ENCODE measurements at regions of chr15 and their contacts with region 1.

Region 1: GRCh38 chr15:81000624-81001151 is at the start of gene TLNRD1:
- DNase-seq: peak; percentile 95
- H3K4me3 ChIP-seq: peak within 1 kb of the TSS; percentile 79 to 88 (median 86)
- H3K27ac ChIP-seq: peak within 1 kb of the TSS; percentile 94 to 98 (median 96)
- H3K4me1 ChIP-seq: peaks cover 0 to 50% (median 30%) of the 10 kb centered on the region in 4 donors
- H3K27me3 ChIP-seq: no peaks in the 10 kb centered on the region
- CTCF ChIP-seq: no peak
- EP300 ChIP-seq: no peak
- POLR2A ChIP-seq: peak; percentile 85 to 94
- total RNA-seq, gene TLNRD1: 12.5 to 18.3 (median 12.8) TPM

Region 2: GRCh38 chr15:80989518-80990478 is 10.9 kb before region 1 on chr15 and contains the start of gene MESD:
- intact Hi-C with region 1: loop called (anchors 1 kb)
- DNase-seq: peak; percentile 99
- H3K4me3 ChIP-seq: peak within 1 kb of the TSS; percentile 69 to 92 (median 87)
- H3K27ac ChIP-seq: peak within 1 kb of the TSS; percentile 89 to 94 (median 92)
- H3K4me1 ChIP-seq: peaks cover 0 to 46% (median 34%) of the 10 kb centered on the region in 4 donors
- H3K27me3 ChIP-seq: no peaks in the 10 kb centered on the region
- CTCF ChIP-seq: no peak
- EP300 ChIP-seq: no peak
- POLR2A ChIP-seq: peak; percentile 72 to 73
- total RNA-seq, gene MESD: 11.7 to 20.8 (median 15.7) TPM

Region 3: DNA sequence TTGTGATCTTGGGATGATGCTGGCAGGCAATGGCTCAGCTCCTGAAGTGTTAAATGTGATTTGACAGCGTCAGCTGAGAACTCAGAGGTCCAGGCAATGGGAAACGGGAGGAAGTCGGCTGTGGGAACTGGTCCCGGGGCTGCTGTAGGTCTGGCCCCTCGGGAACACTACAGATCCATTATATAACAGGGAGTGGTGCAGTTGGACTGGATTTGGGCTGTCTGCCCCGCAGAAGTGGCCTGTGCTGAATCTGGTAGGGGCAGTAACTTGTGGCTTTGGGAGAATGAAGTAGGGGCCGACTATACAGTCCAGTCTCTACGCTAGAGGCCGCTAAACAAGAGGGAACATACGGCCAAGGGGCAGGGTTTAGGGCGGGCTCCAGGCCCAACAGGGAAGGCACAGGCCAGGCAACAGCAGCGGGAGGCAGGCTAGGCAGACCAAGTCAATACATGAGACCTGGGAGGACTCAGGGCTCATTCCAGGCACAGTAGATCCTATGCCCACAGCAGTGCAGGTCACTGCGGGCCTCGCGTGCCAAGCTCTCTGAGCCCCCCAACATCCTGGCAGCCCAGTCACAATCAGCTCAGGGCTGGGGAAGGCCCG is 175.7 kb after region 1 on chr15:
- intact Hi-C with region 1: no loop called
- DNase-seq: peak; percentile 72
- H3K4me3 ChIP-seq: no peak overlapping the region
- H3K27ac ChIP-seq: peak overlapping the region in 2 of 4 donors; percentile 13 to 62
- H3K4me1 ChIP-seq: peaks cover 0 to 5% (median 3%) of the 10 kb centered on the region in 4 donors
- H3K27me3 ChIP-seq: no peaks in the 10 kb centered on the region
- CTCF ChIP-seq: no peak
- EP300 ChIP-seq: no peak
- POLR2A ChIP-seq: no peak

Region 4: DNA sequence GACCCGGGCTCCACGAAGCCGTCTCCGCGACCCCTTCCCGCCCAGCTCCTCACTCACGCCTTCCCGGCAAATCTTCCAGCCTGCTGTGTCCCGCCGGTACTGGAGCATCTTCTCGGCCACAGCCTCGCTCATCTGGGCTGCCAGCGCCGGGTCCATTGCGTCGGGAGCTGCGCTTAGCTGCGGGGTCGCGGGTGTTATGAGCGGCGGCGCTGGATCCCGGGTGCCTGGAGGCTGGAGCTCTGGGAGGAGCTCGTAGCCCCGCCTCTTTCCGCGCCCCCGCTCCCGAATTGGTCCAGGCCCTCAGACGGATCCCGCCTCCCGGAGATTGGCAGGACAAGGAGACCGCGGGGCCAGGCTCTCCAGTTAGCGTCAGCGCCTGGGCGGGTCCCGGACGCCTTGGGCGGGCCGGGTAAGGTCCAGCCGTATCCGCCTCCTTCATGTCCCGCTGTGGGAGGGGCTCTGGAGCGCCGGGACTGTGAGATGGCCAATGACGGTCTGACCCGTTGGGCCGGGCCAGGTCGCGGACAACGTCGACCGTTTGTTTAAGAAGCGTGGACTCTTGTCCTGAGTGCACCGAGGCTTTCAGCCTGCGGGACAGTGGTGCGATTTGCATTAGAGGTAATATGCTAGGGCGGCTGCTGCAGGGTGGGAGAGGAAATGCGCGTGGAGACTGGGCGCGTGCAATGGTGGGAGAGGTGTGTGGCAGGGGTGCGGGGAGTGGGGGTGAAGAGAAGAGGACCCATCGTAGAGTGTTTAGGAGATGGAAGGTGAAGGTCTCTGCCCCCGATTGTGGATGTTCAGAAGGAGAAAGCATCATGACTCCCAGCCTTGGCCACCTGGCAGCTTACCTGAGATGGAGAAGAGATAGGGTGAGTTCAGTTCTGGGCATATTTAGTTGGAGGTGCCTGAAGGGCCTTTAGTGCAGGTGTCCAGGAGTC is 323.5 kb after region 1 on chr15 and contains the start of gene STARD5:
- intact Hi-C with region 1: loop called (anchors 10 kb)
- DNase-seq: peak; percentile 99
- H3K4me3 ChIP-seq: peak within 1 kb of the TSS; percentile 57 to 79 (median 72)
- H3K27ac ChIP-seq: peak within 1 kb of the TSS; percentile 71 to 81 (median 76)
- H3K4me1 ChIP-seq: peaks cover 0 to 20% (median 6%) of the 10 kb centered on the region in 4 donors
- H3K27me3 ChIP-seq: no peaks in the 10 kb centered on the region
- CTCF ChIP-seq: no peak
- EP300 ChIP-seq: no peak
- POLR2A ChIP-seq: peak; percentile 36 to 89
- total RNA-seq, gene STARD5: 0.66 to 6.4 (median 3.0) TPM